ENCODE measurements at regions of chr7 and their contacts with region 1.

Region 1: DNA sequence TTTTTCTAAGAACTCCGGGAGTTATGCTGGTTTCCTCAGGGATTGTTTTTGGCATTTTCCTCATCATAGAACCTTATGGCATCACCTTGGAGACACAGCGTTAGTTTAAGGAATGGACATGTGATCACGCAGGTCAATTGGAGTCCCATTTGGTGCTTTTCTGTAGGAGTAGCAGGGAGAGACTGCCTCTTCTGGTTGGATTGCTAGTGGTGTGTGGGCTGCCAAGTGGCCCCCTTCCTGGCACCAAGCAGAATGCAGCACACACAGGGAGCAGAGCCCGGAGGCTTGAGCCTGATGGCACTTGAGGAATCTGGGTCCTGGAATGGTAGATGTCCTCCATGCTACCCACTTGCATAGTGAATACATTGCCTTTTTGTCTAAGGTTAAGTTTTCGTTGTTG is 57.9 kb downstream of the SDK1 start:
- DNase-seq: no peak
- ATAC-seq: no peak
- H3K4me3 ChIP-seq: no peak overlapping the region
- H3K27ac ChIP-seq: no peak overlapping the region
- H3K4me1 ChIP-seq: peaks cover 30% of the 10 kb centered on the region
- H3K27me3 ChIP-seq: no peaks in the 10 kb centered on the region
- CTCF ChIP-seq: no peak

Region 2: DNA sequence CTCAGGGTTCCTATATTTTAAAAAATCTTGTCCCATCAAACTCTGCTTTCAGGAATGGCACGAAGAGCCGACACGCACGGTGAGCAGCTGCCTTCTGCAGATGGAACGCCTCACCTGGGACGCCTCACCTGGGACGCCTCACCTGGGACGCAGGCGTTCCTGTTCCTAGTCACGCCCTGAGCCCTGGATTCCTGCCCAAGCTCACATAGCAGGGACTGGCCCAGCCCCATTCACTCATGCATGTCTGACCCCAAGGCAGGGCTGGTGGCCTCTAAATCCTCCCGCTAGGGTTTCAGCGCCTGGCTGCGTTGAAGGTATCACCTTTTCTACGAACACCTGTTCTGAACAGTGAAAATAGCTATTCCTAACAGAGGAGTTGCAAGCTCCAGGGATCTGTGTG is 365.1 kb before region 1 on chr7:
- CTCF ChIA-PET with region 1: no interaction called
- POLR2A ChIA-PET with region 1: no interaction called
- in situ Hi-C with region 1: no loop called
- intact Hi-C with region 1: no loop called
- DNase-seq: no peak
- ATAC-seq: no peak
- H3K4me3 ChIP-seq: no peak overlapping the region
- H3K27ac ChIP-seq: no peak overlapping the region
- H3K4me1 ChIP-seq: no peaks in the 10 kb centered on the region
- H3K27me3 ChIP-seq: peaks cover 5% of the 10 kb centered on the region; the same call in 1 of the 2 replicates
- CTCF ChIP-seq: no peak

Region 3: DNA sequence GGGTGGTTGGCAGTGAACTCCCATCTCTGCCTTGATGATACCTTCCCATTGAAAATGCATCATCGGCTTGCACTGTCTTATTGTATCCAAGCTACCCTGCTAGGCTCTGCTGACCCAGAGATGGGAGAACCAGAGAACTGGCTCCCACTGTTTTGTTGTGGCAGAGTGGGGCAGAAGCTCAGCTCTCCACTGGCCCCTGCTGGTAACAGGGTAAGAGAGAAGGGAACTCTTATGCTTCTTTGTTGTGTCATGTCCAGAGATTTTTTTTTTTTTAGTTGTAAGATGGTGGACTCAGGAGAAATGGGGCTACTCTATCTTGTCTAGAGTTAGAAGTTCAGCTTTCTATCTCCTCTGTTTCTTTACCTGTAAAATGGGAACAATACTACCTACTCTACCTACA is 158.5 kb before region 1 on chr7:
- CTCF ChIA-PET with region 1: no interaction called
- POLR2A ChIA-PET with region 1: no interaction called
- in situ Hi-C with region 1: no loop called
- intact Hi-C with region 1: no loop called
- DNase-seq: no peak
- ATAC-seq: no peak
- H3K4me3 ChIP-seq: no peak overlapping the region
- H3K27ac ChIP-seq: no peak overlapping the region
- H3K4me1 ChIP-seq: no peaks in the 10 kb centered on the region
- H3K27me3 ChIP-seq: no peaks in the 10 kb centered on the region
- CTCF ChIP-seq: no peak; the same call in 1 of the 2 replicates

Region 4: DNA sequence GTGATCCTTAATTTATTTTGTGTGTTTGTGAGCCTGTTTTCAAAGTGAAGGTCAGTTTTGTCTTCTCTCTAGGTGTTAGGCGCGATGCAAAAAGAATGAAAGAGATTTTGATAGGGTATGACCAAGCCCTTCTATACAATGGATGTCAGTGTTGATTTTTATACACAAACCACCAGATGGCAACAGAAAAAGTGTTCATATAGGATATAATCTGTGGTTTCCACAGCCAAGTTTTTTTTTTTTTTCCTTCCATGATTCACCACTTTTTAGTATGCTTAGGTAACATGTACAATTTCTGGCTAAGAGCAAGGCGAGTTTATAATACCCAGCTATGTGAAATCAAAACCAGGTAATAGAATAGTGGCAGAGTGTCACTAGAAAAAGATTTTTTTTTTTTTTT is 49.9 kb before region 1 on chr7:
- CTCF ChIA-PET with region 1: no interaction called
- POLR2A ChIA-PET with region 1: no interaction called
- in situ Hi-C with region 1: no loop called
- intact Hi-C with region 1: no loop called
- DNase-seq: no peak
- ATAC-seq: no peak
- H3K4me3 ChIP-seq: no peak overlapping the region
- H3K27ac ChIP-seq: no peak overlapping the region; the same call in 1 of the 2 replicates
- H3K4me1 ChIP-seq: peaks cover 58% of the 10 kb centered on the region
- H3K27me3 ChIP-seq: no peaks in the 10 kb centered on the region
- CTCF ChIP-seq: no peak; the same call in 1 of the 2 replicates

Region 5: GRCh38 chr7:3333861-3334260 is 25.1 kb before region 1 on chr7:
- CTCF ChIA-PET with region 1: interaction called, 13 read pairs
- POLR2A ChIA-PET with region 1: no interaction called
- in situ Hi-C with region 1: no loop called
- intact Hi-C with region 1: no loop called
- DNase-seq: no peak
- ATAC-seq: no peak
- H3K4me3 ChIP-seq: no peak overlapping the region
- H3K27ac ChIP-seq: no peak overlapping the region
- H3K4me1 ChIP-seq: peaks cover 25% of the 10 kb centered on the region
- H3K27me3 ChIP-seq: no peaks in the 10 kb centered on the region
- CTCF ChIP-seq: no peak